ENCODE measurements at regions of chr18 and their contacts with region 1.

Region 1: GRCh38 chr18:59249205-59249774 is 24.0 kb downstream of the RAX start:
- DNase-seq: peak; percentile 58
- ATAC-seq: peak; percentile 82
- H3K4me3 ChIP-seq: no peak overlapping the region
- H3K27ac ChIP-seq: no peak overlapping the region
- H3K4me1 ChIP-seq: no peaks in the 10 kb centered on the region
- H3K27me3 ChIP-seq: peaks cover 3 to 6% of the 10 kb centered on the region in 2 experiments; a peak in 3 of 5 replicates
- CTCF ChIP-seq: peak; percentile 77
- EP300 ChIP-seq: no peak
- POLR2A ChIP-seq: no peak
- RAD21 ChIP-seq: peak; percentile 60

Region 2: GRCh38 chr18:59070181-59070912 is 178.9 kb before region 1 on chr18:
- CTCF ChIA-PET with region 1: no interaction called
- POLR2A ChIA-PET with region 1: no interaction called
- in situ Hi-C with region 1: no loop called
- intact Hi-C with region 1: no loop called
- DNase-seq: peak; percentile 54
- ATAC-seq: peak; percentile 95
- H3K4me3 ChIP-seq: no peak overlapping the region
- H3K27ac ChIP-seq: no peak overlapping the region
- H3K4me1 ChIP-seq: no peaks in the 10 kb centered on the region
- H3K27me3 ChIP-seq: no peaks in the 10 kb centered on the region
- CTCF ChIP-seq: peak; percentile 86
- EP300 ChIP-seq: peak in 1 of 2 experiments; percentile 13; a peak in 1 of 4 replicates
- POLR2A ChIP-seq: no peak
- RAD21 ChIP-seq: peak; percentile 52

Region 3: GRCh38 chr18:59268721-59269562 is 19.7 kb after region 1 on chr18:
- CTCF ChIA-PET with region 1: interaction called, 10 read pairs
- POLR2A ChIA-PET with region 1: no interaction called
- in situ Hi-C with region 1: no loop called
- intact Hi-C with region 1: loop called (anchors 2 kb)
- DNase-seq: peak; percentile 13
- ATAC-seq: peak; percentile 93
- H3K4me3 ChIP-seq: peak overlapping the region; percentile 30 to 70 (median 53); a peak in 4 of 6 replicates
- H3K27ac ChIP-seq: no peak overlapping the region
- H3K4me1 ChIP-seq: no peaks in the 10 kb centered on the region
- H3K27me3 ChIP-seq: peaks cover 9 to 75% of the 10 kb centered on the region in 2 experiments
- CTCF ChIP-seq: peak; percentile 42; the same call in 1 of the 2 replicates
- EP300 ChIP-seq: no peak
- POLR2A ChIP-seq: no peak
- RAD21 ChIP-seq: peak; percentile 89

Region 4: DNA sequence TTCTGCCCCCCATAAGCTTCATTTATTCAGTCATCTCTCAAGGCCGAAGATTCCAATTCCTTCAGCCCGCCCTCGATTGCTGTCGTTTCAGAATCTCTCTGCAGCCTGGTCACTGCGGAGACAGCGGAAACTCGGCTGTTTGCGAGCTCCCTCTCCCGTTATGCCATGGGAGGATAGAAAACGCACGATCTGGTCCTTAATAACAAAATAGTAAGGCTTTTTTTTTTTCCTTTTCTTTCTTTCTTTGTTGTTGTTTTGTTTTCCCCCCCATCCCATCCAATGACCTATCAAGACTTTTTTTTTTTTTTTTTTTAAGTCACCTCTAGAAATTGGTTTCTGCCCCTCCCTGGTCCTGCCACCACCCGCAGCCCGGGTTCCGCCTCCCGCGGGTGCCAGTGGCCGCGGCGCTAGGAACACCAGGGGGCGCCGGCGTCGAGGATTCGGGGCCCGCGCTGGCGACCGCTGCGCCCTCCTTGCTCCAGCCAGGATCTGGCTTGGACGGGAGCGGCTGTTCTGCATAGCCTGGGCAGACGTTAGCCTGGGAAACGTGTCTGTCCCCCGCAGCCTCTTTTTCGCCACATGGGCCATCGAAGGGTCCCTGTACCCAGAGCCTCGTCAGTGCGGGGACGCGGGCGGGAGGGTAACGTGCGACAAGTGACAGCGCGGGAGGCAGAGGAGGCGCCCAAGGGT is 59.1 kb after region 1 on chr18:
- CTCF ChIA-PET with region 1: interaction called, 13 read pairs
- POLR2A ChIA-PET with region 1: no interaction called
- in situ Hi-C with region 1: no loop called
- intact Hi-C with region 1: loop called (anchors 1 kb)
- DNase-seq: peak; percentile 29
- ATAC-seq: peak; percentile 99
- H3K4me3 ChIP-seq: peak overlapping the region in 1 of 3 experiments; percentile 57; a peak in 2 of 6 replicates
- H3K27ac ChIP-seq: no peak overlapping the region
- H3K4me1 ChIP-seq: 0 out of 2 replicates have a peak, but pooled peaks cover 4% of the 10 kb centered on the region
- H3K27me3 ChIP-seq: peaks cover 3 to 51% of the 10 kb centered on the region in 2 experiments; a peak in 4 of 5 replicates
- CTCF ChIP-seq: peak; percentile 90
- EP300 ChIP-seq: no peak
- POLR2A ChIP-seq: no peak
- RAD21 ChIP-seq: peak; percentile 77

Region 5: GRCh38 chr18:59402432-59403090 is 153.3 kb after region 1 on chr18:
- CTCF ChIA-PET with region 1: interaction called, 35 read pairs
- POLR2A ChIA-PET with region 1: no interaction called
- in situ Hi-C with region 1: no loop called
- intact Hi-C with region 1: loop called (anchors 2 kb)
- DNase-seq: peak; percentile 90
- ATAC-seq: peak; percentile 100
- H3K4me3 ChIP-seq: no peak overlapping the region
- H3K27ac ChIP-seq: no peak overlapping the region
- H3K4me1 ChIP-seq: no peaks in the 10 kb centered on the region
- H3K27me3 ChIP-seq: 0 out of 5 replicates have a peak, but pooled peaks cover 0 to 3% of the 10 kb centered on the region in 2 experiments
- CTCF ChIP-seq: peak; percentile 98
- EP300 ChIP-seq: no peak
- POLR2A ChIP-seq: no peak
- RAD21 ChIP-seq: peak; percentile 95

Region 6: DNA sequence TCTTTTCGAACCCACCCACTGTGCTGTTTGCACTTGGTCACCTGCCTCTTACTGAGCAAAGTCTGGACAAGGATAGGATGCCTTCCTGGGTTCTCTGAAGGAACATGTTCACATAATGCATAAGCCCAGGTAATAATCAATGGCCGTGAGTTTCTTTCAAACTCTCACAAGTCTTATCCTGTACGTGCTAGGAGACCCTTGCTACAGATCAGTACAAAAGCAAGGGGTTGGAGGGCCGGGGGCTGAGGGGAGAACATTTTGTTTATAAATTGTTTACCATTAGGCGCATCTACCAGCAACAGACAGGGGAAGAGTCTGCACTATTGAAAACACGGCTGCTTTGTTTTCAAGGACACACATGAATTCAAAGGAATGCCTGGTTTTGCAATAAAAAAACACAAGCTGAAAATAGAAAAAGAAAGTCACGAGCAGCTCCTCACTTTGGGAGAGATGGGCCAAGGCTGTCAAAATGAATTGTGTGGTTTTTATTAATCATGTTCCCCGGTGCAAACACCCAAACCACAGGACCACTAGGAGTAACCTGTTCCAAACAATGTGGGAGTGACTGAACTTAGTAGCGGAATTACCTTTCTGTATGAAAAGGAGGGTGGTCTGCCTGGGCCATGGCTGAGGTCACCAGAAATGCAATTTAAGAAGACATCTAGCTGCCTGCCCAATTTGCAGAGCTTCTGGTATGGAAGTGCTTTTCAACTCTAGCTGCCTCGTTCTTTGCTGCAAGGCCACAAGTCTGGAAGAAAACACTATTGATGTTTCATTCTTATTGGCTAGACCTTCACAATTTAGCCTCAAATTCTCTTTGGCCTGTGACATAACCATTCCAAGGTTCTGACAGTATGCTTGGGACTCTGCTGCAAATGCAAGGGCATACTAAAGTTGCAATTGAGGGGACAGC is 374.4 kb after region 1 on chr18:
- CTCF ChIA-PET with region 1: no interaction called
- POLR2A ChIA-PET with region 1: no interaction called
- in situ Hi-C with region 1: no loop called
- intact Hi-C with region 1: no loop called
- DNase-seq: no peak
- ATAC-seq: no peak
- H3K4me3 ChIP-seq: no peak overlapping the region
- H3K27ac ChIP-seq: no peak overlapping the region
- H3K4me1 ChIP-seq: no peaks in the 10 kb centered on the region
- H3K27me3 ChIP-seq: peaks cover 1 to 9% of the 10 kb centered on the region in 2 experiments; a peak in 2 of 5 replicates
- CTCF ChIP-seq: no peak
- EP300 ChIP-seq: no peak
- POLR2A ChIP-seq: no peak
- RAD21 ChIP-seq: no peak

Measured in HepG2 (cell line).